ENCODE measurements at regions of chr16 and their contacts with region 1.

Region 1: GRCh38 chr16:57084257-57084770 is 8.1 kb upstream of the CPNE2 start:
- DNase-seq: peak; percentile 49 to 77 (median 72)
- H3K4me3 ChIP-seq: no peak overlapping the region
- H3K27ac ChIP-seq: no peak overlapping the region
- H3K4me1 ChIP-seq: peaks cover 3% of the 10 kb centered on the region
- H3K27me3 ChIP-seq: no peaks in the 10 kb centered on the region
- CTCF ChIP-seq: peak; percentile 85 to 89 (median 87)
- EP300 ChIP-seq: no peak
- POLR2A ChIP-seq: no peak

Region 2: DNA sequence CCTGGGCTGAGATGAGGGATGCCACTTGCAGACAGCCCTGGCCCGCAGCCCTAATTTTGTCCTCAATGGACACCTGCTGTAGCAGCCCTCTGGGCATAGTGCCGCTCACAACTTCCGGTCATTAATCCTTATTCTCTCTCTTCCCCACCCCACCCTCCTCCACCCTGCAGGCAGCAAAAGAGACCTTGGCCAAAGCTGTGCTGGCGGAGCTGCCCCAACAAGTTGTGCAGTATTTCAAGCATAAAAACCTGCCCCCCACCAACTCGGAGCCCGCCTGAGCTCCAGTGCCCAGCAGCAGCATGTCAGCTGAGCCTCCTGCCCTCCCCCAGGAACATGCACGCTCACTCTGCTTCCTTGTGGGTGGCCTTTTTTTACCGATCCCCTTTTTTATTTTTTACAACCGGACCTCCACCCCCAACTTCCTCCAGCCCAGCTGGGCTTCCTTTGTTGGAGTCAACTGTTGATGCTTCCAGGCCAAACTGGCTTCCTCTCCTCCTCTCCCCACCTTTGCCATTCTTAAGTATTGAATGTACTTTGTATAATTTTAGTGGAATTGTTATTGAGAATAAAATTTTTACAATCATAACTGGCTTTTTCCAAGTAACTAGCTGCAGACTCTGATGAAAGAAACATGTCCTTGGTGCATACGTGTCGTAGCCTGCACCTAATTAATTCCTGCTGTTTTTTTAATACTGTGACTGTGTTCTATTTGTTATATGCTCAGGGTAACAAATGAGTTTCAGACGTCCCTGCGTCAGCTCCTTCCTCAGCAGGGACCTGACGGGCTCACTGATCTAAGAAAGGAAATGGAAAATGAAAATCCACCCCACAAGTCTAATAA is 63.3 kb after region 1 on chr16:
- intact Hi-C with region 1: loop called in 1 of 4 experiments (anchors 10 kb)
- DNase-seq: peak in 1 of 5 donors; percentile 38
- H3K4me3 ChIP-seq: no peak overlapping the region
- H3K27ac ChIP-seq: no peak overlapping the region
- H3K4me1 ChIP-seq: peaks cover 3% of the 10 kb centered on the region
- H3K27me3 ChIP-seq: no peaks in the 10 kb centered on the region
- CTCF ChIP-seq: no peak
- EP300 ChIP-seq: no peak
- POLR2A ChIP-seq: no peak

Region 3: GRCh38 chr16:57167953-57168352 is 83.6 kb after region 1 on chr16:
- intact Hi-C with region 1: loop called in 3 of 4 experiments (anchors 5 to 10 kb)
- DNase-seq: no peak
- H3K4me3 ChIP-seq: no peak overlapping the region
- H3K27ac ChIP-seq: no peak overlapping the region
- H3K4me1 ChIP-seq: no peaks in the 10 kb centered on the region
- H3K27me3 ChIP-seq: no peaks in the 10 kb centered on the region
- CTCF ChIP-seq: peak in 2 of 3 donors; percentile 34 to 39
- EP300 ChIP-seq: no peak
- POLR2A ChIP-seq: no peak

Region 4: DNA sequence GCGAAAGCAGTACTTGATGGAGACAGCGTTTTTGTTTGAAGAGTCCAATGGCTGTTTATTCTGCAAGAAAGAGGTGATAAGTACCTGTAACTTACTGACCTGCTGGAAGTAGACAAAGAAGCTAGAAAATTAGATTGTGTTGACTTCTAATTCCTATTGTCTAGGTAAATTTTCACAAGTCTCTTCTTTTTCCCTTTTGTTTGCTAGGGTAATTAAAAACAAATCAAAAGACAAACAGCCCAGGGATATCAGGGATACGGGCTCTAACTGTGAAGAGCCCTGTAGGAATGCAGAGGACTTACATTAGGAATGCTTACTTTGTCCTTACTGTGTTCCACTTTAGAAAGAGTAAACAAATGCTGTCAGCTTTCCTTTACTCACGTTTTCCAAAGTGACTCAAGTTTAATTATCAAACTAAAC is 94.5 kb after region 1 on chr16:
- intact Hi-C with region 1: loop called in 1 of 4 experiments (anchors 10 kb)
- DNase-seq: no peak
- H3K4me3 ChIP-seq: no peak overlapping the region
- H3K27ac ChIP-seq: no peak overlapping the region
- H3K4me1 ChIP-seq: no peaks in the 10 kb centered on the region
- H3K27me3 ChIP-seq: no peaks in the 10 kb centered on the region
- CTCF ChIP-seq: no peak
- EP300 ChIP-seq: no peak
- POLR2A ChIP-seq: no peak

Region 5: DNA sequence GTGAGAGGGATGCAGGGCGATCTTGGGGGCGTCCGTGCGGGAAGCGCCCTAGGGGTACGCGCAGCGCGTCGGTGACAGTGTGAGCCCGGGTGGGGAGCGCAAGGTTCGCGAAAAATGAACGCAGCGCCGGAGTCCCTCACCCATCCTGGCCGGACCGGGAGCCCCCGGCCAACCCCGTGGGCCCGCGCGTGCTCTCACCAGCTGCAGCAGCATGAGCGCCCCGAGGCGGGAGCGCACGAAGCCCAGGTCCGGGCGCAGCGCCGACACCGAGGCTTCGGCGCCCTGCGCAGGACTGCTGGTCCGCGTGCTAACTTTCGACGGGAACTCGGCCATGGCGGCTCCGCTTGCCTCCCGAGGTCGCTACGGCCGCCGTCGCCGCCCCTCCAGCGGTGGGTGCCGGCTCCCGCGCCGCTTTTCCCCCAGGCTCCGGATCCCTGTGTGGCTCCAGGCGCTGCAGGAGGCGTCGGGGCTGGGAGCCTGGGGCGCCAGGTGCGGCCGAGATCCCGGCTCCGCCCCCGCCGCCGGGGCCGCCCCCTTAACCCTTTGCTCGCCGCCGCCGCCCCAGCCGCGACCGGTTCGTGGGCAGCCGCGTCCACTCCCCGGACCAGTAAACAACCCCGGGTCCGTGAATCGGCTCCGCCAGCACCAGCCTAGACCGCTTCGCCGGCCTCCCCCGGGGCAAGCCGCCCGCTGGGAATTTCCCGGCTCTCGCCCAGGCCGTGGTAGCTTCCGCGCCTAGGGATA is 200.1 kb after region 1 on chr16 and contains the start of gene PLLP:
- intact Hi-C with region 1: loop called in 1 of 4 experiments (anchors 10 kb)
- DNase-seq: peak in 2 of 5 donors; percentile 51
- H3K4me3 ChIP-seq: peak within 1 kb of the TSS; percentile 37
- H3K27ac ChIP-seq: no peak within 1 kb of the TSS
- H3K4me1 ChIP-seq: peaks cover 7% of the 10 kb centered on the region
- H3K27me3 ChIP-seq: no peaks in the 10 kb centered on the region
- CTCF ChIP-seq: no peak
- EP300 ChIP-seq: no peak
- POLR2A ChIP-seq: no peak
- total RNA-seq, gene PLLP: 0.94 to 54.2 (median 4.0) TPM

Region 6: DNA sequence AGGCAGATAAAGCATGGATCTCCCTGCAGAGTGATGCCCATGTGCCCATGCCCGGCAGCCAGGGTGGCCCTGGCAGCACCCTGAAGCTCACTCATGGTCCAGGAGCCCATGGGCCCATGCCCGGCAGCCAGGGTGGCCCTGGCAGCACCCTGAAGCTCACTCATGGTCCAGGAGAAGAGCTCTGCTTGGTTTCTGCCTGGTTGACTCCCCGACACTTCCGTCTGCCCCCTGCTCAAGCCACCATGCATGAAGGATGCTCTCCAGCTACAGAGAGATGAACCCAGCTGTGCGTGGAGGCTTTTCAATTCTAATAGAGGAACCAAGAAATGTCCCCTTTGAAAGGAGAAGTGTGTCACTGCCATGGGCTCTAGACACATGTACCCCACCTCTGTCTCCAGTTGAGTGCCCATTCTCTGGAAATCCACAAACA is 329.0 kb after region 1 on chr16:
- intact Hi-C with region 1: loop called in 1 of 4 experiments (anchors 10 kb)
- DNase-seq: no peak
- H3K4me3 ChIP-seq: no peak overlapping the region
- H3K27ac ChIP-seq: no peak overlapping the region
- H3K4me1 ChIP-seq: peaks cover 1% of the 10 kb centered on the region
- H3K27me3 ChIP-seq: no peaks in the 10 kb centered on the region
- CTCF ChIP-seq: no peak
- EP300 ChIP-seq: no peak
- POLR2A ChIP-seq: no peak

Region 7: GRCh38 chr16:57422026-57422944 is 338.0 kb after region 1 on chr16:
- intact Hi-C with region 1: loop called in 2 of 4 experiments (anchors 5 to 10 kb)
- DNase-seq: peak; percentile 31 to 64 (median 51)
- H3K4me3 ChIP-seq: no peak overlapping the region
- H3K27ac ChIP-seq: no peak overlapping the region
- H3K4me1 ChIP-seq: peaks cover 4% of the 10 kb centered on the region
- H3K27me3 ChIP-seq: no peaks in the 10 kb centered on the region
- CTCF ChIP-seq: peak in 1 of 3 donors; percentile 29
- EP300 ChIP-seq: no peak
- POLR2A ChIP-seq: no peak

Measured in ovary (tissue), 10 donors.